B cell (primary cell): ENCODE measurements at regions of chr1 and their contacts with region 1.

Region 1: DNA sequence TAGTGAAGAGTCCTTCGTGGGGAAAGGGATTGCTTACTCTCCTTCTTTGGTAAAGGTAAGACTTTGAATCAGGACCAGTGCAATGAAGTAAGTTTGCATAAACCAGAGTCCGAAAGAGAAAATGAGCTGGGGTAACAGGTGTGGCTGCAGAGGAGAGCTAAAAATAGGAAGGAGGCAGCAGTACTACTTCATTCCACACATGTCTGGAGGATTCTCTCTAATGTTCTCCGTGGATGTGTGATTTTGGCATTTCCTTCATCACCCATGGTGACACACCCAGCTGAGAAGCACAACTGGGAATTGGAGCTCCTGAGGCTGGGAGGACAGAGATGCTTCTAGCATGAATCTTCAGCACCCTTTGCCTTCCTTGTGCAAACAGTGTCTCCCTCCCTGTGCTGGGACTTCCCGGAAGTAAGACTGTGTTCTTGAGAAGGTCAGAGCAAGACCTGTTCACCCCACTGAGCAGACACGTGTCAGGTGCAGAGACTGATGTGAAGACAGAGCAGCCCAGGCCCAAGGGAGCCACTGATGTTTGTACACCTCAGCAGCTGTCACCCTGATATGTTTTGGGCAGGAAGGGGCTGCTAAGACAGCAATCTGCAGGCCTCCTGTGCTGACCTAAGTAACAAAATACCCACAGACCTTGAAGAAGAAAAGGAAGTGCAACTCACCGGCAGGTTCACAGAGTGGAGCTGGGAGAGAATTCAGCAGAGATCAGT is 13.3 kb downstream of the FCRL1 start:
- DNase-seq: peak; percentile 92
- ATAC-seq: peak; percentile 92
- H3K4me3 ChIP-seq: peak overlapping the region; percentile 2 to 45 (median 28)
- H3K4me3 Mint-ChIP-seq: peak overlapping the region; percentile 84
- H3K27ac ChIP-seq: peak overlapping the region; percentile 71 to 83
- H3K27ac Mint-ChIP-seq: peak overlapping the region; percentile 87
- H3K4me1 ChIP-seq: peaks cover 86 to 98% of the 10 kb centered on the region in 2 donors
- H3K4me1 Mint-ChIP-seq: peaks cover 87% of the 10 kb centered on the region
- H3K27me3 ChIP-seq: no peaks in the 10 kb centered on the region
- H3K27me3 Mint-ChIP-seq: no peaks in the 10 kb centered on the region
- CTCF ChIP-seq: no peak

Region 2: DNA sequence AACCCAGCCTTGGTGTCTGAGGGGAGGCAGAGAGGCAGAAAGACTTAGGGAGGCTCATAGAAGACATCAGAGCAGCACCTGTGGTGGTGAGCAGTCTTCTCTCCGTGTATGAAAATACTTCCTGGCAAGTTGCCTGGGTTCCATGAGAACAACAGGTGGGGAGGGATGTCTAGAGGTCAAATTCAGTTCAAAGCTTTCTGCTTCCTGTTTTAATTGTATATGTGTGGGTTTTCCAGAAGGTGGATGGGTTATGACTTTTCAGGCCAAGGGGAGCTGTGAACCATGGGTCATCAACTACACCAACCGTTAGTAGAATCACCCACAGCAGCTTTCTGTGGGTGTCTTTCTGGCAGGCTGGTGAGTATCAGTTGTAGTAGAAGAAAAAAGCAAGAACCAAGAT is 25.5 kb before region 1 on chr1:
- CTCF ChIA-PET with region 1: interaction called, 28 read pairs
- POLR2A ChIA-PET with region 1: interaction called, 7 read pairs
- intact Hi-C with region 1: loop called (anchors 1 kb)
- DNase-seq: peak; percentile 45
- ATAC-seq: peak; percentile 6
- H3K4me3 ChIP-seq: peak overlapping the region in 1 of 5 experiments; percentile 17
- H3K4me3 Mint-ChIP-seq: peak overlapping the region; percentile 64
- H3K27ac ChIP-seq: peak overlapping the region; percentile 31 to 53
- H3K27ac Mint-ChIP-seq: peak overlapping the region; percentile 93
- H3K4me1 ChIP-seq: peaks cover 83 to 90% of the 10 kb centered on the region in 2 donors
- H3K4me1 Mint-ChIP-seq: peaks cover 87% of the 10 kb centered on the region
- H3K27me3 ChIP-seq: no peaks in the 10 kb centered on the region
- H3K27me3 Mint-ChIP-seq: no peaks in the 10 kb centered on the region
- CTCF ChIP-seq: no peak

Region 3: DNA sequence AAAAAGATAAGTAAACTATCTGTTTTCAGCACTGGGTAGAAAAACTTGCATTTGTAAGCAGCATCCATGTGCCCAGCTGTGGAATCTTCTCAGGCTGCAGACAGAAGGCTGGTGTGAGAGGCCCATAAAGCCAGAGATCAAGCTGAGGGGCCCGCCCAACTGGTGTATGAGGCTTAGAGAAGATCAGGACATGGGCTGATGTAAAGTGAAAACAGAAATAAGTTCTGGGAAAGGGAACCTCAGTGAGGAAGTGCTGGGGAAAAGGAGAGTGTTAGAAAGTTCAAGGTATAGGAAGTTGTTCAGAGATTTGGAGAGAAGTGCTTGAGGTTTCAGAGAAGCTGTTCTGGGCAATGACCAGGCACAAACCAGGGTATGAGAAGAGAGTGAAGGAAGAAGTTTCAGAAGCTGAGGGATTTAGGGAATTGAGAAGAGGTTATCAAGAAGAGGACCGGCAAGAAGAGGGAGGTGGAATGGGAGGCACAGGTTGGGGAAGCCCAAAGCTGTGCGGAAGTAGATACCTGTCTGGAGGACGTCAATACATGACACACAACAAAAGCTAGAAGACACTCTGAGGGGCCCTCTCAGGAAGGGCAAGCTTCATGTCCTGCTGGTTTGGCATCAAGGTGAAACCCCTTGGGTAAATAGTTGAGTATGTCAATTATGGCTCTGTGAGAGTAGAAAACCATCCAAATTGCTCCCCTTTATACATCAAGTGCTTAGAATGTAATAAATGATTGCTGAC is 37.7 kb after region 1 on chr1:
- CTCF ChIA-PET with region 1: interaction called, 7 read pairs
- POLR2A ChIA-PET with region 1: interaction called, 4 read pairs
- intact Hi-C with region 1: loop called (anchors 5 kb)
- DNase-seq: no peak
- ATAC-seq: no peak
- H3K4me3 ChIP-seq: no peak overlapping the region
- H3K4me3 Mint-ChIP-seq: peak overlapping the region; percentile 23
- H3K27ac ChIP-seq: peak overlapping the region in 1 of 2 donors; percentile 39
- H3K27ac Mint-ChIP-seq: peak overlapping the region; percentile 51
- H3K4me1 ChIP-seq: peaks cover 64 to 79% of the 10 kb centered on the region in 2 donors
- H3K4me1 Mint-ChIP-seq: peaks cover 75% of the 10 kb centered on the region
- H3K27me3 ChIP-seq: no peaks in the 10 kb centered on the region
- H3K27me3 Mint-ChIP-seq: no peaks in the 10 kb centered on the region
- CTCF ChIP-seq: no peak

Region 4: GRCh38 chr1:157862114-157863070 is 55.8 kb after region 1 on chr1:
- CTCF ChIA-PET with region 1: interaction called, 12 read pairs
- POLR2A ChIA-PET with region 1: no interaction called
- intact Hi-C with region 1: no loop called
- DNase-seq: peak; percentile 34
- ATAC-seq: peak; percentile 24
- H3K4me3 ChIP-seq: no peak overlapping the region
- H3K4me3 Mint-ChIP-seq: no peak overlapping the region
- H3K27ac ChIP-seq: no peak overlapping the region
- H3K27ac Mint-ChIP-seq: peak overlapping the region; percentile 32
- H3K4me1 ChIP-seq: peaks cover 6 to 7% of the 10 kb centered on the region in 2 donors
- H3K4me1 Mint-ChIP-seq: peaks cover 19% of the 10 kb centered on the region
- H3K27me3 ChIP-seq: no peaks in the 10 kb centered on the region
- H3K27me3 Mint-ChIP-seq: no peaks in the 10 kb centered on the region
- CTCF ChIP-seq: no peak